Aorta (tissue), 5 donors: ENCODE measurements at regions of chr6 and their contacts with region 1.

Region 1: DNA sequence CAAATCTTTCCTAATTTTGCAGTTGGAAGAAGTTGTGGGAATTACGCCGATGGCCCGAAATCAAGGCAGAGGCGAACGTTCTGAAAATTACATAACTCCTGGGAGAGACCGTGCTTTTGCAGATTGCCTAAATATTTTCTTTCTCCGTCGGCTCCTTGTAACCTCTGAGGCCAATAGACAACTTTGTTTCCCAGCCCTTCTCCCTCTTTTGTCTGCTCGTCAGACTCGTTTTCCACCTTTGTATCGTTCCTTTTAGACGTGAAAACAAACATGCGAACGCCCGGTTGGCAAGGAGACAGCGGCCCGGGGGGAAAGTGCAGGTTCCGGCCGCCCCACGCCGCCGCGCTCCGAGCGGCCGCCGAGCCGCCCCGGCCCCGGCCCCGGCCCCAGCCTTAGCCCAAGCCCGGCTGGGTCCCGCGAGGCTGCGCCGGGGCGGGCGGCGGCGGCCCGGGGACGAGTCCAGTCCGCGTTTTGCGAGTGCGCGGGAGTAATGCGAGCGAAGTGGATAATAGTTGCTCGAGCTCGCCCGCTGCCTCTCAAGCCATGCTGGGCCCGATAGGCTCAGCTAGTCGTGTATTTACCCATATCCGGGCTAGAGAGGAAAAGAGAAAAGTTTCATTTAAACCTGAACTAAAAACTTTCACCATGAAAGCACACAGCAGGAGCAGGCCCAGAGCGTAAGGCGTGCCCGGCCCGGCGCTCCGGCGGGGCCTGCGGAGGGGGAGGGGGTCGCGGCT is at the start of gene ARID1B:
- DNase-seq: peak; percentile 88 to 94
- ATAC-seq: peak; percentile 81
- H3K4me3 ChIP-seq: peak within 1 kb of the TSS; percentile 87 to 96
- H3K27ac ChIP-seq: peak within 1 kb of the TSS; percentile 85 to 100
- H3K4me1 ChIP-seq: no peaks in the 10 kb centered on the region
- H3K27me3 ChIP-seq: no peaks in the 10 kb centered on the region
- total RNA-seq, gene ARID1B: 92.0 to 143 TPM

Region 2: DNA sequence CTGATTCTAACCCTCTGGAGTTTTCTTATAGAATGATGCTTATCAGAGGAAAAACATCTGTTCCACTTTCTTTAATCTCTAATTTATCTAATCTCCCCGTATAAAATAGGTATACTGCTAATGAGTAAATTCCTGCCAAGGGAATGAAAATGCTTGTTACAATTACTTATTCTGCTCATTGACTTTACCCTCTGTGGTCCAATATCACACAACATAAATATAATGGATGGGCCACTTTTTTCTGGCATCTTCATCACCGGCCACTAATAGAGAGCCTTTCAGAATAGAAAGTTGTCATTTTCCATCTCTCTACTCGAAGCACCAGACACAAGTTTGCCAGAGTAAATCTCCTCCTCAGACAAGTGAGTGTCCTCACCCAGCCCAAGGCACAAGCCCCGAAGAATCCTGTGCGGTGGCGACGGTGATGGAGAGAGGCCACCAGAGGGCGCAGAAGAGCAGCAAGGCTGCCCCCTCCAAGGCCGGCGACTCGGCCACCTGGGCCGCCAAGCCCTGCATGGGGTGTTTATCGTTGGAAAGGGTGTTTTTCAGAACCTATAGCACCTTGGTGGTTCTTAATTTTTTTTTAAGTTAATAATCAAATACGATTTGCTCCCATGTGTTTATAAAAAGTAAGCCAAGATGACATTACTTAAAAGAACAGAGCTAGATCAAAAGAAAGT is 212.7 kb before region 1 on chr6:
- intact Hi-C with region 1: loop called (anchors 5 kb)
- DNase-seq: peak; percentile 83 to 93
- ATAC-seq: peak; percentile 93
- H3K4me3 ChIP-seq: no peak overlapping the region
- H3K27ac ChIP-seq: no peak overlapping the region
- H3K4me1 ChIP-seq: no peaks in the 10 kb centered on the region
- H3K27me3 ChIP-seq: peaks cover 0 to 2% of the 10 kb centered on the region in 2 donors

Region 3: GRCh38 chr6:156719720-156720563 is 57.1 kb before region 1 on chr6:
- intact Hi-C with region 1: loop called (anchors 2 to 5 kb)
- DNase-seq: peak; percentile 97 to 98
- ATAC-seq: peak; percentile 96
- H3K4me3 ChIP-seq: peak overlapping the region in 1 of 2 donors; percentile 19
- H3K27ac ChIP-seq: peak overlapping the region in 1 of 2 donors; percentile 96
- H3K4me1 ChIP-seq: no peaks in the 10 kb centered on the region
- H3K27me3 ChIP-seq: no peaks in the 10 kb centered on the region

Region 4: GRCh38 chr6:156949376-156949775 is 172.4 kb after region 1 on chr6:
- intact Hi-C with region 1: loop called (anchors 10 kb)
- DNase-seq: no peak
- ATAC-seq: peak; percentile 53
- H3K4me3 ChIP-seq: no peak overlapping the region
- H3K27ac ChIP-seq: no peak overlapping the region
- H3K4me1 ChIP-seq: peaks cover 2 to 4% of the 10 kb centered on the region in 2 donors
- H3K27me3 ChIP-seq: no peaks in the 10 kb centered on the region

Region 5: GRCh38 chr6:157099912-157100593 is 323.0 kb after region 1 on chr6:
- intact Hi-C with region 1: no loop called
- DNase-seq: no peak
- ATAC-seq: no peak
- H3K4me3 ChIP-seq: no peak overlapping the region
- H3K27ac ChIP-seq: no peak overlapping the region
- H3K4me1 ChIP-seq: no peaks in the 10 kb centered on the region
- H3K27me3 ChIP-seq: no peaks in the 10 kb centered on the region

Region 6: DNA sequence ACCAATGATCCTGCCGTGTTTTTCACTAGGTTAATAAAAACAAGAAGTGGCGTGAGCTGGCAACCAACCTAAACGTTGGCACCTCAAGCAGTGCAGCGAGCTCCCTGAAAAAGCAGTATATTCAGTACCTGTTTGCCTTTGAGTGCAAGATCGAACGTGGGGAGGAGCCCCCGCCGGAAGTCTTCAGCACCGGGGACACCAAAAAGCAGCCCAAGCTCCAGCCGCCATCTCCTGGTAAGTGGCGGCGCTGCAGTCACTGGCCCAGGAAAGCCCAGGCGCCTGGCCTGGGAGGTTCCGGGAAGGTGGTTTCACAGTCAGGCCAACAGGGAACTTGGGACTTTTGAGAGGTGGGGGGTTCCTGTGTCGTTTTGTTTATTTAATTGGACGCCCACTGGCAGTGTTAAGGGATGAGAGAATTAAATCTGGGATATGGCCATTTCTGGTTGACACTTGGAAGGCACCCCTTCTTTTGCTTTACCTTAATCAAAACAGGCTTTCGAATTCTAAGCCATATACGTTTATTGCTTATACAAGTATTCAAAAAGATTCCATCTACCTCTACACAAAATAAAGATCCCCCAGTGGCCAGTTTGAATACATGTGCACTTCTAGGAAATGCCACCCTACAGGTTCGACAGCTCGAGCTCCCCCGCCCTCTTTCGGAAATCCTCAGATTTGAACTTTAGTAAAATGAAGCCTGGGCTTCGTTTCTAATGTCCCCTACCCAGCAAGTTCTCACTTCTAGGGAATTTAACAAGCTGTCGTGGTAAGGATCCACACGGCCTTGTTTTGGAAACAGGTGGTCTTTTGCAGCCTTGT is 407.4 kb after region 1 on chr6:
- intact Hi-C with region 1: loop called (anchors 10 kb)
- DNase-seq: peak; percentile 81 to 91
- ATAC-seq: peak; percentile 90
- H3K4me3 ChIP-seq: no peak overlapping the region
- H3K27ac ChIP-seq: peak overlapping the region in 1 of 2 donors; percentile 20
- H3K4me1 ChIP-seq: no peaks in the 10 kb centered on the region
- H3K27me3 ChIP-seq: no peaks in the 10 kb centered on the region